KBM-7 (cell line): ENCODE measurements at regions of chr1 and their contacts with region 1.

Region 1: DNA sequence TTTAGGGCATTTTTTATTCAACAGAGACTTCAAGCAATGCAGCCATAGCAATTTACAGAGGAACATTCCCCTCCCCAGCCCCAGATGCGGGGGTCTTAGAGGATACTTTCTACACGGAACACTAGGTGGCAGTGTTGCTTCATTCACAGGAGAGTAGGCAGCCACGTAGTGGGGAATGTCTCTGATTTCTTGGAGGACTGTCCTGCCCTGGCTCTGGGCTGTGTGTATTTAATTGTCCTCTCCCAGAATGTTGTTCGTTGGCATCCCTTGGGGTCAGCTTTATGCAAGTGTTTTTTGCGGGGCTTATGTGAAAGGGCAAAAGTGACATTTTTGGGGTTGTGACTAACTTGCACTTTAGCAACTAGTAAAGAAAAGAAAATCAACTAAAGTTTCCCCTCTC is 96.9 kb downstream of the PAPPA2 start:
- DNase-seq: peak; percentile 43

Region 2: GRCh38 chr1:176773038-176773437 is 213.2 kb after region 1 on chr1:
- in situ Hi-C with region 1: no loop called
- DNase-seq: no peak

Region 3: DNA sequence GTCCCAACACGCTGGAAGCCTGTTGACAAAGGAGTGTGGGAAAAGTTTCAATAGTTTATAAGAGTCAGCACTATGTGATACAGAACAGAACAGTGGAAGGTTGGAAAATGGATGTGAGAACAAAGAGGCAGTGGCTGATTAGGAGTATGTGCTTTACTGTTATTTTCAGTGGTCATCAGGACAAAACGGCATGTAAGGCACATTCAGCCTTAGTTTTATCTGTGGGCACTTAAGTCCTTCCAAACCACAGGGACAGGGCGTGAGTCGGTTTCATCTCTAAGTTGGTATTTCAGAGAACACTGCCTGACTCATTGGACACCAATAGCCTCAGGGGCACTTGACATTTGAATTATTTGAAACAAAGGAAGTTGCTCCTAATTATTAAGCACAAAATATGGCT is 297.8 kb after region 1 on chr1:
- in situ Hi-C with region 1: loop called (anchors 25 kb)
- DNase-seq: no peak

Region 4: GRCh38 chr1:177170756-177171535 is 611.1 kb after region 1 on chr1 and contains the start of gene BRINP2:
- in situ Hi-C with region 1: no loop called
- DNase-seq: no peak